Posterior cingulate gyrus (tissue), 11 donors: ENCODE measurements at regions of chrX and their contacts with region 1.

Region 1: GRCh38 chrX:51892921-51893745 is at the start of gene MAGED1:
- DNase-seq: peak; percentile 78 to 98 (median 84)

Region 2: GRCh38 chrX:52261463-52262194 is 368.5 kb after region 1 on chrX:
- intact Hi-C with region 1: loop called (anchors 5 kb)
- DNase-seq: peak; percentile 85 to 99 (median 96)